SK-N-SH (cell line): ENCODE measurements at regions of chr7 and their contacts with region 1.

Region 1: GRCh38 chr7:98745722-98746318 is 124.0 kb downstream of the TMEM130 start:
- DNase-seq: peak; percentile 79
- H3K4me3 ChIP-seq: peak overlapping the region in 1 of 2 experiments; percentile 56; a peak in 1 of 4 replicates
- H3K27ac ChIP-seq: no peak overlapping the region
- H3K4me1 ChIP-seq: no peaks in the 10 kb centered on the region
- H3K27me3 ChIP-seq: no peaks in the 10 kb centered on the region
- CTCF ChIP-seq: peak; percentile 59
- EP300 ChIP-seq: no peak
- RAD21 ChIP-seq: peak; percentile 79

Region 2: GRCh38 chr7:98464558-98464940 is 281.3 kb before region 1 on chr7:
- CTCF ChIA-PET with region 1: interaction called, 17 read pairs
- POLR2A ChIA-PET with region 1: no interaction called
- DNase-seq: no peak
- H3K4me3 ChIP-seq: no peak overlapping the region
- H3K27ac ChIP-seq: no peak overlapping the region
- H3K4me1 ChIP-seq: peaks cover 0 to 4% of the 10 kb centered on the region in 2 experiments; a peak in 1 of 4 replicates
- H3K27me3 ChIP-seq: no peaks in the 10 kb centered on the region
- CTCF ChIP-seq: no peak
- EP300 ChIP-seq: no peak
- RAD21 ChIP-seq: no peak

Region 3: GRCh38 chr7:98713165-98713810 is 32.5 kb before region 1 on chr7:
- CTCF ChIA-PET with region 1: interaction called, 18 read pairs
- POLR2A ChIA-PET with region 1: no interaction called
- DNase-seq: no peak
- H3K4me3 ChIP-seq: no peak overlapping the region
- H3K27ac ChIP-seq: no peak overlapping the region
- H3K4me1 ChIP-seq: no peaks in the 10 kb centered on the region; a peak in 2 of 4 replicates
- H3K27me3 ChIP-seq: no peaks in the 10 kb centered on the region
- CTCF ChIP-seq: no peak
- EP300 ChIP-seq: no peak
- RAD21 ChIP-seq: no peak

Region 4: GRCh38 chr7:98733036-98733435 is 12.8 kb before region 1 on chr7:
- CTCF ChIA-PET with region 1: interaction called, 89 read pairs
- POLR2A ChIA-PET with region 1: no interaction called
- DNase-seq: peak; percentile 55
- H3K4me3 ChIP-seq: no peak overlapping the region
- H3K27ac ChIP-seq: no peak overlapping the region
- H3K4me1 ChIP-seq: no peaks in the 10 kb centered on the region
- H3K27me3 ChIP-seq: no peaks in the 10 kb centered on the region
- CTCF ChIP-seq: peak; percentile 46; the same call in 1 of the 2 replicates
- EP300 ChIP-seq: no peak
- RAD21 ChIP-seq: no peak

Region 5: DNA sequence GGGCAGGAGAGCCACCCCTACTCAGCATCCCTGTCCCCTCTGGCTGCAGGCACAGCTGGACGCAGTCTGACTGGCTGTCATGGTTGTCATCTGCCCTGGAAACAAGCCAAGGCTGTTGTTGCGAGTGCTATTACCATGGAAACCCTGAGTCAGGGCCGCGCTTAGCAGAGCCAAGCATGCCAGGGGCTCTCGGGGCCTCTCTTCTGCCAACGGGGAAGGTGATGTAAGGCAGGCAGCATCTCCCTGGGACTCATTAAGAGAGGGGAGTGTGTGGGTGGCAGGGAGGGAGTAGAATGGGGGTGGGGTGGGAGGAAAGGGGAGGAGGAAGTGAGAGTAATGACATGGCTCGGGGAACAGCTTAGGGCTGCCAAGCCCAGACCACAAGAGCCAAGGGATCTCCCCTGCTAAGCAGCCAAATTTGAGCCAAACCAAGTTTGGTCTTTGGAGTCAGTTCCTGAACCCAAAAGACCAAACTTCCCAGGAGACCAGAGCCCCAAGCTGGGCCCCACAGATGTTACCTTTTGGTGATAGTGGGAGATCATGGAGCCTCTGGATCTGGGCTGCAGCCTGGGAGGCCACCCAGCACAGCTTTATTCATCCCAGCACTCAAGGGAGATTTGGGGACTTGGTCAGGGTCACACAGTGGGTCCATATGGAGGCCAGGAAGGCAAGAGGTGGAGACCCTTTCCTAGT is 56.4 kb after region 1 on chr7:
- CTCF ChIA-PET with region 1: interaction called, 41 read pairs
- POLR2A ChIA-PET with region 1: no interaction called
- DNase-seq: peak; percentile 91
- H3K4me3 ChIP-seq: no peak overlapping the region
- H3K27ac ChIP-seq: peak overlapping the region in 1 of 2 experiments; percentile 45; a peak in 2 of 4 replicates
- H3K4me1 ChIP-seq: peaks cover 0 to 12% of the 10 kb centered on the region in 2 experiments; a peak in 1 of 4 replicates
- H3K27me3 ChIP-seq: no peaks in the 10 kb centered on the region
- CTCF ChIP-seq: no peak
- EP300 ChIP-seq: peak in 1 of 2 experiments; percentile 68; a peak in 1 of 4 replicates
- RAD21 ChIP-seq: peak; percentile 3; the same call in 1 of the 2 replicates